Mammary epithelial cell (primary cell): ENCODE measurements at regions of chr6 and their contacts with region 1.

Region 1: GRCh38 chr6:160792708-160793107 is 90.7 kb downstream of the PLG start:
- DNase-seq: no peak
- H3K4me3 ChIP-seq: no peak overlapping the region
- H3K27ac ChIP-seq: no peak overlapping the region
- H3K4me1 ChIP-seq: peaks cover 20% of the 10 kb centered on the region
- H3K27me3 ChIP-seq: no peaks in the 10 kb centered on the region
- CTCF ChIP-seq: no peak

Region 2: DNA sequence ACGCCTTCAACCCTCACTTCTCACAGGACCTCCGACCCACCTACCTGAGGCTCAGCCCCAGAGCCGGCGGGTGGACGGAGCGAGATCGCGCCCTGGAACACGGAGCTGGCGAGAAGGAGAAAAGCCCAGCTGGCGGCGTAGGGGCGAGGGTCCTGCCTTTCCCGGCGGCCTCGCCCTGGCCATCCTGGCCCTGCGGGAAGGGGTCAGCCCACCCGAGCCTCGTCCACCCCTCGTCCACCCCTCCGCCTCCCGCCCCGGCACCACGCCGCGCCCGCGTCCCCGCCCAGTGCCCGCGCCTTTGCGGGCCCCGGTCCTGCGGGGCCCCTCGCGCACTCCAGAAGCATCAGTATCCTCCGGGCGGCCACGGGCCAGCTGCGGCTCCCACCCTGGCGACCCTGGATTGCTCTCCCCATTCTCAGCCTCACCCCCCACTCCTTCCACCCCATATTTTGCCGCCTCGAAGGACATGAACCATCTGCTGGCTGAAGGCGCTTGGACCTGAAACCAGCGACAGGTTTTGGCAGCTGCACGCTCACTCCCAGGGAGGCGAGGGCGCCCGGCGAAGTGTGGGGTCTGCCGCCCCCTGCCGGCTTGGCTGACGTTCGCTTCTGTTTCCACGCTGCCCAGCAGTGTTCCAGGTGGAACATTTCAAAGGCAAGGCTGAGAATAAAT is 25.6 kb before region 1 on chr6:
- CTCF ChIA-PET with region 1: interaction called, 10 read pairs
- dilution Hi-C with region 1: no loop called
- in situ Hi-C with region 1: no loop called
- intact Hi-C with region 1: no loop called
- DNase-seq: peak; percentile 52
- H3K4me3 ChIP-seq: peak overlapping the region; percentile 58 to 68 (median 61)
- H3K27ac ChIP-seq: no peak overlapping the region
- H3K4me1 ChIP-seq: peaks cover 4% of the 10 kb centered on the region
- H3K27me3 ChIP-seq: no peaks in the 10 kb centered on the region
- CTCF ChIP-seq: peak; percentile 76 to 95

Region 3: DNA sequence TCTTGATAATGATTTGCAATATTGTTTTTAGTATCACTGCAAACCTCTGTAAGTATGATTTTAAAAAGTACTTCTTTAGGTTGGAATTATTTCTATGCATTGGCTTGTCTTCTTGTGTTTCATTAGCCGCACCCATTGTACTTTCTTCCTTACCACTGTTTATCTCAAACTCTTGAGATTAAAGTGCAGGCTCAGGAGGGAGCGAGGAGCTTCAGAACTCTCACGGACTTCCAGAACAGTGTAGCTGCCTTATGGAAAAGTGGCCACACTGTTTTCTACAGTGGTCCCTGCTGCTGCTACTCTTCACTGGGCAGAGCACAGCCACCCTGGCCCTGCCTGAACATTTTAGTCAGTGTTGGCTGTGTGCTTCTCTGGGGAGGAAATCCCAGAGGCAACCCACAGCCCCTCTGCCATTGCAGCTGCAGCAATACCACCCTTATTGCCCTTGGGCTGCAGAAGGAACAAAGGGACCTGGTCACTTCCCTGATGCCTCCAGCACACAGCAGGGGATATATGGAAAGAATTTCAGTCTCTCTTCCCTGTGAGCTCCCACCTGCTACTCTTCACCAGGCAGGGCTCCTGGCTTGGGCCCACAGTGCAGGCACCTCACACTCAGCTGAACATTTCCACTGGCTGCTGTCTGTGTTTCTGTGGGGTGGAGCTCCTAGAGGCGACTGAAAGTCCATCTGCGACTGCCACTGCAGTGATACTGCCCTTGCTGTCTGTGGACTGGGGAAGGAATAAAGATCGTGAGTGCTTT is 107.1 kb after region 1 on chr6:
- CTCF ChIA-PET with region 1: no interaction called
- dilution Hi-C with region 1: no loop called
- in situ Hi-C with region 1: no loop called
- intact Hi-C with region 1: no loop called
- DNase-seq: no peak
- H3K4me3 ChIP-seq: no peak overlapping the region
- H3K27ac ChIP-seq: no peak overlapping the region
- H3K4me1 ChIP-seq: peaks cover 7% of the 10 kb centered on the region
- H3K27me3 ChIP-seq: no peaks in the 10 kb centered on the region
- CTCF ChIP-seq: no peak

Region 4: GRCh38 chr6:160967833-160968232 is 175.1 kb after region 1 on chr6:
- CTCF ChIA-PET with region 1: no interaction called
- dilution Hi-C with region 1: no loop called
- in situ Hi-C with region 1: no loop called
- intact Hi-C with region 1: no loop called
- DNase-seq: no peak
- H3K4me3 ChIP-seq: no peak overlapping the region
- H3K27ac ChIP-seq: no peak overlapping the region
- H3K4me1 ChIP-seq: peaks cover 12% of the 10 kb centered on the region
- H3K27me3 ChIP-seq: no peaks in the 10 kb centered on the region
- CTCF ChIP-seq: no peak

Region 5: GRCh38 chr6:161631676-161632194 is 839.0 kb after region 1 on chr6:
- CTCF ChIA-PET with region 1: no interaction called
- dilution Hi-C with region 1: no loop called
- in situ Hi-C with region 1: no loop called
- intact Hi-C with region 1: no loop called
- DNase-seq: no peak
- H3K4me3 ChIP-seq: no peak overlapping the region
- H3K27ac ChIP-seq: no peak overlapping the region
- H3K4me1 ChIP-seq: no peaks in the 10 kb centered on the region
- H3K27me3 ChIP-seq: no peaks in the 10 kb centered on the region
- CTCF ChIP-seq: no peak